ENCODE measurements at regions of chr22 and their contacts with region 1.

Region 1: DNA sequence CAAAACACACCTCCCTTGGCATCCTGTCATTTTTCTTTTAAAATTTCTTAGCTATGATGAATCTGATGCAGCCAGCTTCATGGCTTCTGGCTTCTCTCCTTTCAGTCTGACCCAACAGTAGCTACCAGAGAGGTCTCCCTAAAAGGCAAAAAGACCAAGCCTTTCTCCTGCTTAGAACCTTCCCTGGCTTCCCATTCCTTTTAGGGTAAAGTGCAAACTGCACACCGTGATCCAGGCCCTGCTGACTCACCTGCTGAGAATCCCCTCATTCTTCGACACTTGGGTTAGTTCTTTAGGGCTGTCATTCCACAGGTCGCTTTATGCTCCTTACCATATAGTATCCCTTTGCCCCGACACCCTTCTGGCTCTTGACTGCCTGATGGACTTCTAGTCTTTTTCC is 362.4 kb downstream of the MIAT start:
- DNase-seq: peak; percentile 24 to 79
- H3K4me3 ChIP-seq: no peak overlapping the region
- H3K27ac ChIP-seq: peak overlapping the region; percentile 80 to 83
- H3K4me1 ChIP-seq: peaks cover 0 to 8% of the 10 kb centered on the region in 2 donors
- H3K27me3 ChIP-seq: no peaks in the 10 kb centered on the region
- CTCF ChIP-seq: no peak

Region 2: DNA sequence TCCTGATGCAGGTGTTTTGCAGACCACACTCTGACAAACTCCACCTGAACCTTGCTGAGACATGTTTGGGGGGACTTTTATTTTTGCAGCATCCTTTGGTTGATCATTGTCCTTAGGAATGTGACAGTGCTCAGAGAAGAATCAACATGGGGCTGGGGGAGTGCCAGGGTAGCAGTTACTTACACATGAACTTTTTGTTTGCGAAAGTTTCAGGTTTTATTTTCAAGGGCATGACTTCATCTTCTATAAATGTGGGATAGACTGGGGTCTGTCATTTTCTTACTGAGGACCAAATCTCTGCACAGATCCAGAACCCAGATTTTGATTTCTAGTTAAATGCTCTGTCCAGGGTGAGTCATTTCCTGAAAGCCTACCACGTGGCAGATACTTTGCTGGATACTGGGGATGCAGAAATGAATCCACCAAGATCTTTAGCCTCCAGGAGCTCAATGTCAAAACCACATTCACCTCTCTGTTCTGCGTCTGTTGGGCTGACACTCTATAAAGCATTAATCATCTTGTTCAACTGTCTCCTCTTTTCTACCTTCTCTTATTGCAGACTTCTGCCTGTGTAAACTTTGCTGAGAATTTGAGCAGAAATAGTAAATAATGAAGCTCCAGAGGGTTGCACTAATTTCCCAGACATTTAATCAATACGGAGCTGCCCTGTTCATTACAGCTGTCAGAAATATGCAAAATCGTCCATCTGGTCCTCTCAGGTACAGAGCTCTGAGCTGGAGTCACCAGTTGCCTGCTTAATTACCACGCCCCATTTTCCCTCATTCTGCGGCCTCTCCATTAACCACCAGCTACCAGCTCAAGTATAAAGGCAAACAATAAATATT is 25.5 kb after region 1 on chr22:
- intact Hi-C with region 1: no loop called
- DNase-seq: no peak
- H3K4me3 ChIP-seq: no peak overlapping the region
- H3K27ac ChIP-seq: no peak overlapping the region
- H3K4me1 ChIP-seq: no peaks in the 10 kb centered on the region
- H3K27me3 ChIP-seq: no peaks in the 10 kb centered on the region
- CTCF ChIP-seq: no peak

Region 3: DNA sequence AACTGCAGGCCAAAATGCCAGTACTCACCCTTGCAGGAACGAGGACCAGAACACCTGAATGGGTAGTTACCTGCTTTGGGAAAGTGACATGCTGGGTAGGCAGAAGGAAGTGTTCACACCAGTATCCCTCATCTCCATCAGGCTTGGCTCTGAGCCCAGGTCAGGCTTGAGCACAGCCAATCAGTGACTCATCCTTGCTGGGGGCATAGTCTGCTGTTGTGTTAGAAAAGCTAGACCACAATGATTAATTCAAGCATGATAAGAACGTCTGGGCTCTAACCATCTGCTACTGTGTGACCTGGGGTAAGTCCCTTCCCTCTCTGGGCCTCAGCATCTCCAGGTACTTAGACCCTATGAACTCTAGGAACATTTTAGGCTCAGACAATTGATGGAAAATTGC is 88.0 kb after region 1 on chr22:
- intact Hi-C with region 1: loop called (anchors 2 kb)
- DNase-seq: peak; percentile 21 to 90
- H3K4me3 ChIP-seq: no peak overlapping the region
- H3K27ac ChIP-seq: peak overlapping the region; percentile 68 to 76
- H3K4me1 ChIP-seq: peaks cover 11 to 60% of the 10 kb centered on the region in 2 donors
- H3K27me3 ChIP-seq: no peaks in the 10 kb centered on the region
- CTCF ChIP-seq: no peak